H1 (cell line): ENCODE measurements at regions of chr5 and their contacts with region 1.

Region 1: DNA sequence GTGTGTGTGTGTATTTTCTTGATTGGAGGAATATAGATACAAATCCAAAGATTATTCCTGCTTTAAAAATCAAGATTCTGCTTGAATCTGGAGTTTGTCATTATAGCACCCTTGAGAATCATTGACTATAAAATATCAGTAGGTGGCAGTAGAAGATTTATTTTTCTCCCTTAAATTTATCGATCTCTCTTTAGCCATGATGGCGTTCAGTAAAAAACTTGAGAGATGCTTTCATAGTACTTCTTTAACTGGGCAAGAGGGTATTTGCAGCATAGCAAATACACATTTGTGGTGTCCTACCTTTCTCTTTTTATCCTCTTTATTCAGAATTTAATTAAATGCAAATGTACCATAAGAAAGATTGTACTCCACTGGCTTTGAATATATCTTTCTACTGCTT is 307.7 kb downstream of the ADGRV1 start:
- DNase-seq: no peak
- H3K4me3 ChIP-seq: no peak overlapping the region
- H3K27ac ChIP-seq: no peak overlapping the region
- H3K4me1 ChIP-seq: no peaks in the 10 kb centered on the region; a peak in 1 of 7 replicates
- H3K27me3 ChIP-seq: no peaks in the 10 kb centered on the region
- CTCF ChIP-seq: peak in 1 of 3 experiments; percentile 31; a peak in 2 of 4 replicates
- EP300 ChIP-seq: no peak
- POLR2A ChIP-seq: no peak
- RAD21 ChIP-seq: peak; percentile 57 to 68

Region 2: GRCh38 chr5:90658620-90659019 is 207.7 kb before region 1 on chr5:
- CTCF ChIA-PET with region 1: no interaction called
- POLR2A ChIA-PET with region 1: no interaction called
- DNase-seq: no peak
- H3K4me3 ChIP-seq: no peak overlapping the region
- H3K27ac ChIP-seq: no peak overlapping the region
- H3K4me1 ChIP-seq: no peaks in the 10 kb centered on the region
- H3K27me3 ChIP-seq: no peaks in the 10 kb centered on the region
- CTCF ChIP-seq: no peak
- EP300 ChIP-seq: no peak
- POLR2A ChIP-seq: no peak
- RAD21 ChIP-seq: no peak

Region 3: GRCh38 chr5:90813392-90813791 is 52.9 kb before region 1 on chr5:
- CTCF ChIA-PET with region 1: no interaction called
- POLR2A ChIA-PET with region 1: no interaction called
- DNase-seq: no peak
- H3K4me3 ChIP-seq: no peak overlapping the region
- H3K27ac ChIP-seq: no peak overlapping the region
- H3K4me1 ChIP-seq: no peaks in the 10 kb centered on the region
- H3K27me3 ChIP-seq: no peaks in the 10 kb centered on the region
- CTCF ChIP-seq: no peak
- EP300 ChIP-seq: no peak
- POLR2A ChIP-seq: no peak
- RAD21 ChIP-seq: no peak

Region 4: GRCh38 chr5:90849939-90850338 is 16.4 kb before region 1 on chr5:
- CTCF ChIA-PET with region 1: interaction called, 11 read pairs
- POLR2A ChIA-PET with region 1: no interaction called
- DNase-seq: no peak
- H3K4me3 ChIP-seq: no peak overlapping the region
- H3K27ac ChIP-seq: no peak overlapping the region
- H3K4me1 ChIP-seq: no peaks in the 10 kb centered on the region
- H3K27me3 ChIP-seq: no peaks in the 10 kb centered on the region
- CTCF ChIP-seq: no peak
- EP300 ChIP-seq: no peak
- POLR2A ChIP-seq: no peak
- RAD21 ChIP-seq: no peak

Region 5: GRCh38 chr5:90878549-90879196 is 12.3 kb after region 1 on chr5:
- CTCF ChIA-PET with region 1: interaction called, 40 read pairs
- POLR2A ChIA-PET with region 1: no interaction called
- DNase-seq: no peak
- H3K4me3 ChIP-seq: no peak overlapping the region
- H3K27ac ChIP-seq: no peak overlapping the region
- H3K4me1 ChIP-seq: peaks cover 0 to 17% (median 10%) of the 10 kb centered on the region in 4 experiments; a peak in 4 of 7 replicates
- H3K27me3 ChIP-seq: no peaks in the 10 kb centered on the region
- CTCF ChIP-seq: no peak
- EP300 ChIP-seq: no peak
- POLR2A ChIP-seq: no peak
- RAD21 ChIP-seq: no peak

Region 6: GRCh38 chr5:90894866-90895420 is 28.6 kb after region 1 on chr5:
- CTCF ChIA-PET with region 1: interaction called, 13 read pairs
- POLR2A ChIA-PET with region 1: interaction called, 3 read pairs
- DNase-seq: no peak
- H3K4me3 ChIP-seq: no peak overlapping the region
- H3K27ac ChIP-seq: no peak overlapping the region
- H3K4me1 ChIP-seq: peaks cover 0 to 2% (median under 1%) of the 10 kb centered on the region in 4 experiments; a peak in 1 of 7 replicates
- H3K27me3 ChIP-seq: no peaks in the 10 kb centered on the region
- CTCF ChIP-seq: no peak
- EP300 ChIP-seq: no peak
- POLR2A ChIP-seq: no peak
- RAD21 ChIP-seq: no peak

Region 7: GRCh38 chr5:90932052-90932699 is 65.8 kb after region 1 on chr5:
- CTCF ChIA-PET with region 1: interaction called, 14 read pairs
- POLR2A ChIA-PET with region 1: no interaction called
- DNase-seq: no peak
- H3K4me3 ChIP-seq: no peak overlapping the region
- H3K27ac ChIP-seq: no peak overlapping the region
- H3K4me1 ChIP-seq: peaks cover 0 to 4% (median 0%) of the 10 kb centered on the region in 4 experiments; a peak in 1 of 7 replicates
- H3K27me3 ChIP-seq: no peaks in the 10 kb centered on the region
- CTCF ChIP-seq: peak; percentile 11 to 77 (median 66)
- EP300 ChIP-seq: no peak
- POLR2A ChIP-seq: no peak
- RAD21 ChIP-seq: peak; percentile 85 to 86